MCF 10A (cell line): ENCODE measurements at regions of chr6 and their contacts with region 1.

Region 1: GRCh38 chr6:70566751-70567382 is at the start of gene SDHAF4:
- DNase-seq: peak; percentile 93
- H3K4me3 Mint-ChIP-seq: peak within 1 kb of the TSS; percentile 77
- H3K27ac Mint-ChIP-seq: peak within 1 kb of the TSS; percentile 66
- H3K4me1 Mint-ChIP-seq: peaks cover 5% of the 10 kb centered on the region
- H3K27me3 Mint-ChIP-seq: no peaks in the 10 kb centered on the region
- CTCF ChIP-seq: no peak
- total RNA-seq, gene SDHAF4: 13.1 and 15.2 TPM in 2 replicates

Region 2: DNA sequence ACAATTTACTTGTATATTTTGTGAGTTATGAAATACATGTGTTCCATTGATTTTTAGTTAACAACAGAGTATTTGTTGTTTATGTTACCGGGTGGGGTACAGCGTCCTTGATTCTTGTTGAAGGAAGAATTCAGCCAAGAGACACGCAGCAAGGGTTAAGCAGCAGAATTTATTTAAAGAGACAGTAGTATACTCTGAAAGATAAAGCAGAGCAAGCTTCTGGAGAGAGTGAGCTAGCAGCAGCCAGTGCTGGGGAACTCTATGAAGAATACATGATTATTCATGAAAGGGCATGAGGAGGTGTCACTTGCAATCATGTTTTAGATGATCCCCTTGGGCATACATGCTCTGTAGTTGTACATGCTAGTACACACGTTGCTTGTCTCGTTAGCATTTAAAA is 77.5 kb before region 1 on chr6:
- CTCF ChIA-PET with region 1: no interaction called
- POLR2A ChIA-PET with region 1: no interaction called
- intact Hi-C with region 1: no loop called
- DNase-seq: no peak
- H3K4me3 Mint-ChIP-seq: no peak overlapping the region
- H3K27ac Mint-ChIP-seq: no peak overlapping the region
- H3K4me1 Mint-ChIP-seq: no peaks in the 10 kb centered on the region
- H3K27me3 Mint-ChIP-seq: no peaks in the 10 kb centered on the region
- CTCF ChIP-seq: no peak

Region 3: GRCh38 chr6:70667711-70668498 is 101.0 kb after region 1 on chr6 and contains the start of gene SMAP1:
- CTCF ChIA-PET with region 1: interaction called, 3 read pairs
- POLR2A ChIA-PET with region 1: interaction called, 37 read pairs
- intact Hi-C with region 1: loop called (anchors 2 kb)
- DNase-seq: peak; percentile 91
- H3K4me3 Mint-ChIP-seq: peak within 1 kb of the TSS; percentile 90
- H3K27ac Mint-ChIP-seq: peak within 1 kb of the TSS; percentile 89
- H3K4me1 Mint-ChIP-seq: peaks cover 35% of the 10 kb centered on the region
- H3K27me3 Mint-ChIP-seq: no peaks in the 10 kb centered on the region
- CTCF ChIP-seq: no peak
- total RNA-seq, gene SMAP1: 26.5 and 28.2 TPM in 2 replicates